Panc1 (cell line): ENCODE measurements at regions of chr1 and their contacts with region 1.

Region 1: GRCh38 chr1:245337829-245338484 is 183.2 kb downstream of the KIF26B start:
- DNase-seq: no peak
- ATAC-seq: no peak
- H3K4me3 ChIP-seq: no peak overlapping the region
- H3K27ac ChIP-seq: no peak overlapping the region
- H3K4me1 ChIP-seq: no peaks in the 10 kb centered on the region
- H3K27me3 ChIP-seq: no peaks in the 10 kb centered on the region
- CTCF ChIP-seq: no peak

Region 2: GRCh38 chr1:244628789-244629188 is 709.2 kb before region 1 on chr1:
- CTCF ChIA-PET with region 1: no interaction called
- POLR2A ChIA-PET with region 1: no interaction called
- in situ Hi-C with region 1: no loop called
- intact Hi-C with region 1: no loop called
- DNase-seq: no peak
- ATAC-seq: no peak
- H3K4me3 ChIP-seq: no peak overlapping the region
- H3K27ac ChIP-seq: no peak overlapping the region
- H3K4me1 ChIP-seq: no peaks in the 10 kb centered on the region
- H3K27me3 ChIP-seq: no peaks in the 10 kb centered on the region; the same call in 1 of the 2 replicates
- CTCF ChIP-seq: no peak

Region 3: GRCh38 chr1:245166471-245166885 is 171.5 kb before region 1 on chr1:
- CTCF ChIA-PET with region 1: no interaction called
- POLR2A ChIA-PET with region 1: interaction called, 15 read pairs
- in situ Hi-C with region 1: no loop called
- intact Hi-C with region 1: no loop called
- DNase-seq: no peak
- ATAC-seq: no peak
- H3K4me3 ChIP-seq: no peak overlapping the region
- H3K27ac ChIP-seq: no peak overlapping the region
- H3K4me1 ChIP-seq: no peaks in the 10 kb centered on the region
- H3K27me3 ChIP-seq: peaks cover 5% of the 10 kb centered on the region; the same call in 1 of the 2 replicates
- CTCF ChIP-seq: no peak